Activated CD8-positive, alpha-beta T cell treated with anti-CD3 and anti-CD28 coated beads, Interleukin-2, amount 10 ng/mL, durations not matched to agents 7 days and 5 days (primary cell): ENCODE measurements at regions of chr2 and their contacts with region 1.

Region 1: DNA sequence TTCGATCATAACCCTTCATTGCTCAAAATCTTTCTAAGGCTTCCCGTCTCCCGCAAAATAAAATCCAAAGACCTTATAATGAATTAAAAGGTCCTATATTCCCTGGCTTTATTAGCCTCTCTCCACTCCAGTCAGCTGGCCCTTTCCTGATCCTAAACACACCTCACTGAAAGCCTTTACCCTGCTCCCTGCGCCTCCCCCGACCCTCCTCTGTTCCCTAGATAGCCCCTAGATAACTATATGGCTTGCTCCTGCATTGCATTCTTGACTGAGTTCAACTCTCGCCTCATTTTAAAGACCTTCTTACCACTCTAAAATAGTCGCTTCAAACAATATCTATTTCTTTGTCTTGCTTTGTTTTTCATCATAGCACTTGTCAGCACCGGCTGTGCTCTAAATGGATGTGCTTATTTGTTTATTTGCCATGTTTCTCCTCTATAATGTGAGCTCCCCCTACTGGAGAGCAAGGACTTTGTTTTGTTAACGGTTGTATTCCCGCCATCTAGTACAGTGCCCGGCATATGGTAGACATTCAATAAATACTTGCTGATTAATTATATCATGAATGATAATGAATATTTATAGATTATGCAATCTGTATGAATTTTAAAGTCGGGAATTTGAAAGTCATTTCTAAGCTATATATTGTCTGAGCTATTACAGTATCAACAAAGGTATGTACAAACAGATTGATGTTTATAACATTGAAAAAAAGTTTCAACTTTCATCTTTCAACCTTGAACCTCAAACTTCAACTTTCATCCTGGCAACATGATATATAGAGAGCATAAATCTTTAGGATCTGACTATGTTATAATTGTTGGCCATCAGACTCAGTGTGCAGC is 32.4 kb upstream of the VIT start:
- DNase-seq: peak; percentile 32
- ATAC-seq: peak; percentile 76
- H3K4me3 Mint-ChIP-seq: no peak overlapping the region
- H3K27ac Mint-ChIP-seq: no peak overlapping the region
- H3K4me1 Mint-ChIP-seq: no peaks in the 10 kb centered on the region
- H3K27me3 Mint-ChIP-seq: peaks cover 5% of the 10 kb centered on the region

Region 2: GRCh38 chr2:36351736-36352349 is 312.2 kb before region 1 on chr2:
- CTCF ChIA-PET with region 1: interaction called, 21 read pairs
- POLR2A ChIA-PET with region 1: no interaction called
- DNase-seq: peak; percentile 33
- ATAC-seq: no peak
- H3K4me3 Mint-ChIP-seq: no peak overlapping the region
- H3K27ac Mint-ChIP-seq: no peak overlapping the region
- H3K4me1 Mint-ChIP-seq: peaks cover 10% of the 10 kb centered on the region
- H3K27me3 Mint-ChIP-seq: peaks cover 28% of the 10 kb centered on the region

Region 3: DNA sequence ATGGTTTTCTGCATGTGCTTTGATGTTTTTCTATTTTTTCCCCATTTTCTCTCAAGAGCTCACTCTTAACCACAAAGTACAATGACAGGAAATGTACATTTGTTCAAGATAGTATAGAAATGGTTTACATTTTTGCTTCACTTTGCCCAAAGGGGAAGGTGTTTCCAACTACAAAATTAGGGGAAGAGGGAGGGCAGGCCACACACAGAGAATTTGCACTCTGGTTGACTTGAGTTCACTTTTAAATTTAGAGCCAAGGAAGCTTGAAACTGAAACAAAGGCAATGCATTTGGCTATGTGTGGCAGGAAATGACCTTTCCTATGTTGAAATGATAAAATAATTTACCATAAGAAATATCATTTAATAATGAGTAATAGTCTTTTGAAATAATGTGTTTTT is 13.3 kb after region 1 on chr2:
- CTCF ChIA-PET with region 1: interaction called, 11 read pairs
- POLR2A ChIA-PET with region 1: no interaction called
- DNase-seq: no peak
- ATAC-seq: no peak
- H3K4me3 Mint-ChIP-seq: no peak overlapping the region
- H3K27ac Mint-ChIP-seq: no peak overlapping the region
- H3K4me1 Mint-ChIP-seq: peaks cover 14% of the 10 kb centered on the region
- H3K27me3 Mint-ChIP-seq: peaks cover 18% of the 10 kb centered on the region